CD8-positive, alpha-beta T cell (primary cell): ENCODE measurements at regions of chr7 and their contacts with region 1.

Region 1: GRCh38 chr7:149125863-149126661 is at the start of gene ZNF425:
- DNase-seq: peak; percentile 89 to 98 (median 95)
- ATAC-seq: peak; percentile 86
- H3K4me3 ChIP-seq: peak within 1 kb of the TSS; percentile 99
- H3K4me3 Mint-ChIP-seq: peak within 1 kb of the TSS; percentile 100
- H3K27ac ChIP-seq: peak within 1 kb of the TSS; percentile 86 to 88
- H3K27ac Mint-ChIP-seq: peak within 1 kb of the TSS; percentile 98
- H3K4me1 ChIP-seq: peaks cover 18% of the 10 kb centered on the region
- H3K4me1 Mint-ChIP-seq: peaks cover 28% of the 10 kb centered on the region
- H3K27me3 ChIP-seq: no peaks in the 10 kb centered on the region
- H3K27me3 Mint-ChIP-seq: no peaks in the 10 kb centered on the region
- CTCF ChIP-seq: peak; percentile 83
- total RNA-seq, gene ZNF425: 0.52 to 0.56 TPM

Region 2: GRCh38 chr7:148884299-148885022 is 241.6 kb before region 1 on chr7:
- CTCF ChIA-PET with region 1: no interaction called
- POLR2A ChIA-PET with region 1: no interaction called
- intact Hi-C with region 1: loop called in 1 of 2 experiments (anchors 1 kb)
- DNase-seq: peak; percentile 87 to 97 (median 93)
- ATAC-seq: peak; percentile 89
- H3K4me3 ChIP-seq: peak overlapping the region; percentile 54 to 61
- H3K4me3 Mint-ChIP-seq: peak overlapping the region; percentile 87
- H3K27ac ChIP-seq: peak overlapping the region; percentile 47 to 67
- H3K27ac Mint-ChIP-seq: peak overlapping the region; percentile 89
- H3K4me1 ChIP-seq: peaks cover 8% of the 10 kb centered on the region
- H3K4me1 Mint-ChIP-seq: peaks cover 24% of the 10 kb centered on the region
- H3K27me3 ChIP-seq: peaks cover 0 to 4% of the 10 kb centered on the region in 2 experiments
- H3K27me3 Mint-ChIP-seq: no peaks in the 10 kb centered on the region
- CTCF ChIP-seq: no peak

Region 3: GRCh38 chr7:149028346-149029109 is 97.5 kb before region 1 on chr7 and contains the start of gene PDIA4:
- CTCF ChIA-PET with region 1: interaction called, 3 read pairs
- POLR2A ChIA-PET with region 1: no interaction called
- intact Hi-C with region 1: loop called (anchors 1 kb)
- DNase-seq: peak; percentile 98 to 100 (median 99)
- ATAC-seq: peak; percentile 88
- H3K4me3 ChIP-seq: peak within 1 kb of the TSS; percentile 58 to 78
- H3K4me3 Mint-ChIP-seq: peak within 1 kb of the TSS; percentile 87
- H3K27ac ChIP-seq: peak within 1 kb of the TSS; percentile 62 to 78
- H3K27ac Mint-ChIP-seq: peak within 1 kb of the TSS; percentile 94
- H3K4me1 ChIP-seq: peaks cover 27% of the 10 kb centered on the region
- H3K4me1 Mint-ChIP-seq: peaks cover 49% of the 10 kb centered on the region
- H3K27me3 ChIP-seq: no peaks in the 10 kb centered on the region
- H3K27me3 Mint-ChIP-seq: no peaks in the 10 kb centered on the region
- CTCF ChIP-seq: no peak
- total RNA-seq, gene PDIA4: 12.0 to 14.5 TPM

Region 4: DNA sequence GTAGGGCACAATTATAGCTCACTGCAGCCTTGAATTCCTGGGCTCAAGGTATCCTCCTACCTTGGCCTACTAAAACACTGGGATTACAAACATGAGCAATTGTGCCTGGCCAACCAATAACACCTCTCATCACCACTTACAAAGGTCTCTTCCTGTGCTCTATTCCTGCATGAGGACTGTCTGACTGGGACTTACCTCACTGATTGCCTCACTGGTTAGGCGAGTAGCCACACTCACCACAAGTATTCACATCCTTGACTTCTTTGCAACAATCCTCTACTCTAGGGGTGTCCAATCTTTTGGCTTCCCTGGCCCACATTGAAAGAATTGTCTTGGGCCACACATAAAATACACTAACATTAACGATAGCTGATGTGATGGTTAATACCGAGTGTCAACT is 75.1 kb before region 1 on chr7:
- CTCF ChIA-PET with region 1: no interaction called
- POLR2A ChIA-PET with region 1: no interaction called
- intact Hi-C with region 1: no loop called
- DNase-seq: no peak
- ATAC-seq: no peak
- H3K4me3 ChIP-seq: no peak overlapping the region
- H3K4me3 Mint-ChIP-seq: no peak overlapping the region
- H3K27ac ChIP-seq: no peak overlapping the region
- H3K27ac Mint-ChIP-seq: no peak overlapping the region
- H3K4me1 ChIP-seq: no peaks in the 10 kb centered on the region
- H3K4me1 Mint-ChIP-seq: no peaks in the 10 kb centered on the region
- H3K27me3 ChIP-seq: no peaks in the 10 kb centered on the region
- H3K27me3 Mint-ChIP-seq: no peaks in the 10 kb centered on the region
- CTCF ChIP-seq: no peak

Region 5: GRCh38 chr7:149239345-149240191 is 113.5 kb after region 1 on chr7 and contains the start of gene ZNF212:
- CTCF ChIA-PET with region 1: interaction called, 4 read pairs
- POLR2A ChIA-PET with region 1: no interaction called
- intact Hi-C with region 1: loop called (anchors 2 to 5 kb)
- DNase-seq: peak; percentile 76 to 92 (median 89)
- ATAC-seq: peak; percentile 100
- H3K4me3 ChIP-seq: peak within 1 kb of the TSS; percentile 81 to 95
- H3K4me3 Mint-ChIP-seq: peak within 1 kb of the TSS; percentile 92
- H3K27ac ChIP-seq: peak within 1 kb of the TSS; percentile 41 to 67
- H3K27ac Mint-ChIP-seq: peak within 1 kb of the TSS; percentile 91
- H3K4me1 ChIP-seq: peaks cover 23% of the 10 kb centered on the region
- H3K4me1 Mint-ChIP-seq: peaks cover 34% of the 10 kb centered on the region
- H3K27me3 ChIP-seq: peaks cover 0 to 4% of the 10 kb centered on the region in 2 experiments
- H3K27me3 Mint-ChIP-seq: peaks cover 7% of the 10 kb centered on the region
- CTCF ChIP-seq: peak; percentile 85
- total RNA-seq, gene ZNF212: 20.9 to 22.1 TPM

Region 6: DNA sequence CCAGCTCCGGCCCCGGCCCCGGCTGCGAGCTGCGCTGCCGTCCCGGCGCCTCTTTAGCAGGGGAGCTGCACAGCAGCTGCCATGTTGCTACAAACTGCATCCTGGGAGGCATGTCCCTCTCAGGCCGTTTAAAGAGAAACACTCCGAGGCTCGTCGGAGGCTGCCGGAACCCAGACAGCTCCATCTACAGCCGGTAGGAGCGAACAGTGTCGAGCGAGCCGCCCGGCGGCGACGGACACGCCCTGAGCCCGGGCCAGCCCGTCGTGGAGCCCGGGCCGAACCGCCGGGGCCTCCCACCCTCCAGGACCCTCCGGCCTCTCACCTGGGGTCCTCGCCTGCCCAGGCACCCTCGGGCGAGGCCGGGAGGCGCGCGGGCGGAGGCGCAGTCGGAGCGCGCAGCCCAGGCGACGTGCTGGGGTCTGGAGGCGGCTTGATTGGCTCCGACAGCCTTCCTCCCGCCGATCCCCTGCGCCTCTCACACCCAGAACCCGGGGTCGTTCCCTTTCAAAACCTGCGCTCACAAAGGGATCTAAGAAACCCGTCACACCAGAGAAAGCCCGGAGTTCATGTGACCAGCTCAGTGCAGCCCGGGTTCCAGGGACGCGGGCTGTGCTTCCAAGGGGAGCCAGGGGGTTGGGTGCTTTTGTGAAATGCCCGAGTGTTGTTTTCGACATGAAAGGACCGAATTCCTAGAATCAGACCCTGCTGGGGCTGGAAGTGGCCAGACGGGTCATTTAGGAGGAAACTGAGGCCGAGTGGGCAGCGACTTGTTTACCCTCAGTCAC is 334.6 kb after region 1 on chr7 and contains the start of gene ZNF777:
- CTCF ChIA-PET with region 1: no interaction called
- POLR2A ChIA-PET with region 1: no interaction called
- intact Hi-C with region 1: loop called in 1 of 2 experiments (anchors 1 kb)
- DNase-seq: peak; percentile 66 to 90 (median 81)
- ATAC-seq: peak; percentile 97
- H3K4me3 ChIP-seq: peak within 1 kb of the TSS; percentile 69 to 74
- H3K4me3 Mint-ChIP-seq: peak within 1 kb of the TSS; percentile 88
- H3K27ac ChIP-seq: peak within 1 kb of the TSS; percentile 55 to 69
- H3K27ac Mint-ChIP-seq: peak within 1 kb of the TSS; percentile 72
- H3K4me1 ChIP-seq: peaks cover 24% of the 10 kb centered on the region
- H3K4me1 Mint-ChIP-seq: peaks cover 33% of the 10 kb centered on the region
- H3K27me3 ChIP-seq: no peaks in the 10 kb centered on the region
- H3K27me3 Mint-ChIP-seq: peaks cover 10% of the 10 kb centered on the region
- CTCF ChIP-seq: peak; percentile 57
- total RNA-seq, gene ZNF777: 21.0 to 22.2 TPM

Region 7: DNA sequence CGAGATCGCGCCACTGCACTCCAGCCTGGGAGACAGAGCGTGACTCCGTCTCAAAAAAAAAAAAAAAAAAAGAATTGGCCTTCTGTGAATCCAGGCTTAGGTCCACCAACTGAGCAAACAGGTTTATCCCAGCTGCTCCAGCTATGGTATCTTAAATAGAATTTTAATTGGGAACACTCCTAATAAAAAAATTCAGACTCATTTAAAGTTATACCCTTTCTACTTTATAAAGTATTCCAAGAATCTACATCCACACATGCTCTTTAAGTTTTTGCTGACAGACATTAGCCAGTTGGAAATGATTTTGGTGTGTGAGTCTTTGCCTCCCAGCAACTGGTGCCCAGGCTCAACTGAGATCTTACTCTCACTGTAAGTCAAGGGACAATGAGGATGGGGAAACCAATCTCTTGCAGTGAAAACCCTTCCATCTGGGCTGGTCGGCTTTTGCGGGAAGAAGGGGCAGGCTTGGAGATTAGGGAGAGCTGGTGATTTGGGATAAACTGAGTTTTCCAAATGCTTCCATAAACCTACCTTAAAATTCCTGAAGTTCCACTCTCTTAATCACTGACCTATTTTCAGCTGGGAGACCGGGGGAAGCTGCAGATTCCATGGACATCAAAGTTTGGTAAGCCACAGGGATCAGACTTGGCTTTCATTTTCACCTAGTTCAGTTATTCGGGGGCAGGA is 460.7 kb after region 1 on chr7:
- CTCF ChIA-PET with region 1: no interaction called
- POLR2A ChIA-PET with region 1: no interaction called
- intact Hi-C with region 1: no loop called
- DNase-seq: no peak
- ATAC-seq: no peak
- H3K4me3 ChIP-seq: no peak overlapping the region
- H3K4me3 Mint-ChIP-seq: no peak overlapping the region
- H3K27ac ChIP-seq: no peak overlapping the region
- H3K27ac Mint-ChIP-seq: no peak overlapping the region
- H3K4me1 ChIP-seq: no peaks in the 10 kb centered on the region
- H3K4me1 Mint-ChIP-seq: peaks cover 12% of the 10 kb centered on the region
- H3K27me3 ChIP-seq: no peaks in the 10 kb centered on the region
- H3K27me3 Mint-ChIP-seq: no peaks in the 10 kb centered on the region
- CTCF ChIP-seq: no peak

Region 8: GRCh38 chr7:149714050-149714909 is 588.2 kb after region 1 on chr7:
- CTCF ChIA-PET with region 1: no interaction called
- POLR2A ChIA-PET with region 1: no interaction called
- intact Hi-C with region 1: loop called in 1 of 2 experiments (anchors 10 kb)
- DNase-seq: peak; percentile 86 to 97 (median 94)
- ATAC-seq: peak; percentile 95
- H3K4me3 ChIP-seq: peak overlapping the region; percentile 65 to 68
- H3K4me3 Mint-ChIP-seq: peak overlapping the region; percentile 80
- H3K27ac ChIP-seq: peak overlapping the region; percentile 12
- H3K27ac Mint-ChIP-seq: peak overlapping the region; percentile 22
- H3K4me1 ChIP-seq: peaks cover 18% of the 10 kb centered on the region
- H3K4me1 Mint-ChIP-seq: peaks cover 23% of the 10 kb centered on the region
- H3K27me3 ChIP-seq: no peaks in the 10 kb centered on the region
- H3K27me3 Mint-ChIP-seq: no peaks in the 10 kb centered on the region
- CTCF ChIP-seq: no peak